CD4-positive, alpha-beta memory T cell (primary cell): ENCODE measurements at regions of chr1 and their contacts with region 1.

Region 1: GRCh38 chr1:3796215-3797061 is at the start of gene LRRC47:
- DNase-seq: peak; percentile 94 to 95 (median 94)
- H3K4me3 ChIP-seq: peak within 1 kb of the TSS; percentile 62 to 65
- H3K4me3 Mint-ChIP-seq: peak within 1 kb of the TSS; percentile 93 to 99 (median 94)
- H3K27ac ChIP-seq: peak within 1 kb of the TSS; percentile 59
- H3K27ac Mint-ChIP-seq: peak within 1 kb of the TSS; percentile 80 to 98 (median 96)
- H3K4me1 ChIP-seq: peaks cover 41% of the 10 kb centered on the region
- H3K4me1 Mint-ChIP-seq: peaks cover 23 to 57% (median 34%) of the 10 kb centered on the region in 4 donors
- H3K27me3 ChIP-seq: no peaks in the 10 kb centered on the region
- H3K27me3 Mint-ChIP-seq: peaks cover 0 to 9% of the 10 kb centered on the region in 2 donors
- total RNA-seq, gene LRRC47: 54.5 to 58.0 TPM

Region 2: GRCh38 chr1:3649342-3650247 is 146.8 kb before region 1 on chr1 and contains the start of gene WRAP73:
- CTCF ChIA-PET with region 1: no interaction called
- POLR2A ChIA-PET with region 1: interaction called, 3 read pairs
- intact Hi-C with region 1: loop called (anchors 1 kb)
- DNase-seq: peak; percentile 85 to 88 (median 87)
- H3K4me3 ChIP-seq: peak within 1 kb of the TSS; percentile 5 to 66
- H3K4me3 Mint-ChIP-seq: peak within 1 kb of the TSS; percentile 81 to 96 (median 86)
- H3K27ac ChIP-seq: peak within 1 kb of the TSS; percentile 54
- H3K27ac Mint-ChIP-seq: peak within 1 kb of the TSS; percentile 26 to 88 (median 68)
- H3K4me1 ChIP-seq: peaks cover 41% of the 10 kb centered on the region
- H3K4me1 Mint-ChIP-seq: peaks cover 12 to 41% (median 28%) of the 10 kb centered on the region in 4 donors
- H3K27me3 ChIP-seq: peaks cover 11% of the 10 kb centered on the region
- H3K27me3 Mint-ChIP-seq: peaks cover 18 to 19% of the 10 kb centered on the region in 2 donors
- total RNA-seq, gene WRAP73: 39.0 to 40.7 TPM

Region 3: GRCh38 chr1:3746830-3747521 is 49.5 kb before region 1 on chr1:
- CTCF ChIA-PET with region 1: no interaction called
- POLR2A ChIA-PET with region 1: no interaction called
- intact Hi-C with region 1: loop called (anchors 1 kb)
- DNase-seq: peak; percentile 81 to 89 (median 83)
- H3K4me3 ChIP-seq: peak overlapping the region in 1 of 2 donors; percentile 57
- H3K4me3 Mint-ChIP-seq: peak overlapping the region; percentile 78 to 86 (median 80)
- H3K27ac ChIP-seq: peak overlapping the region; percentile 36
- H3K27ac Mint-ChIP-seq: peak overlapping the region in 6 of 7 donors; percentile 52 to 87 (median 78)
- H3K4me1 ChIP-seq: peaks cover 17% of the 10 kb centered on the region
- H3K4me1 Mint-ChIP-seq: peaks cover 21 to 41% (median 32%) of the 10 kb centered on the region in 4 donors
- H3K27me3 ChIP-seq: no peaks in the 10 kb centered on the region
- H3K27me3 Mint-ChIP-seq: no peaks in the 10 kb centered on the region

Region 4: GRCh38 chr1:3856908-3857790 is 60.7 kb after region 1 on chr1 and contains the starts of genes CEP104 and DFFB:
- CTCF ChIA-PET with region 1: no interaction called
- POLR2A ChIA-PET with region 1: interaction called, 18 read pairs
- intact Hi-C with region 1: loop called (anchors 1 kb)
- DNase-seq: peak; percentile 99
- H3K4me3 ChIP-seq: peak within 1 kb of the TSS; percentile 88 to 96
- H3K4me3 Mint-ChIP-seq: peak within 1 kb of the TSS; percentile 95 to 99 (median 98)
- H3K27ac ChIP-seq: peak within 1 kb of the TSS; percentile 71
- H3K27ac Mint-ChIP-seq: peak within 1 kb of the TSS; percentile 88 to 98 (median 96)
- H3K4me1 ChIP-seq: peaks cover 35% of the 10 kb centered on the region
- H3K4me1 Mint-ChIP-seq: peaks cover 18 to 56% (median 35%) of the 10 kb centered on the region in 4 donors
- H3K27me3 ChIP-seq: no peaks in the 10 kb centered on the region
- H3K27me3 Mint-ChIP-seq: no peaks in the 10 kb centered on the region
- total RNA-seq, gene CEP104: 64.0 to 64.4 TPM
- total RNA-seq, gene DFFB: 23.2 to 26.1 TPM

Region 5: GRCh38 chr1:3900119-3900968 is 103.9 kb after region 1 on chr1 and contains the start of gene C1orf174:
- CTCF ChIA-PET with region 1: no interaction called
- POLR2A ChIA-PET with region 1: interaction called, 8 read pairs
- intact Hi-C with region 1: loop called (anchors 1 kb)
- DNase-seq: peak; percentile 96 to 99 (median 98)
- H3K4me3 ChIP-seq: peak within 1 kb of the TSS; percentile 54 to 84
- H3K4me3 Mint-ChIP-seq: peak within 1 kb of the TSS; percentile 86 to 98 (median 94)
- H3K27ac ChIP-seq: peak within 1 kb of the TSS; percentile 81
- H3K27ac Mint-ChIP-seq: peak within 1 kb of the TSS; percentile 93 to 99 (median 96)
- H3K4me1 ChIP-seq: peaks cover 52% of the 10 kb centered on the region
- H3K4me1 Mint-ChIP-seq: peaks cover 30 to 71% (median 42%) of the 10 kb centered on the region in 4 donors
- H3K27me3 ChIP-seq: no peaks in the 10 kb centered on the region
- H3K27me3 Mint-ChIP-seq: no peaks in the 10 kb centered on the region
- total RNA-seq, gene C1orf174: 34.6 to 36.0 TPM